Endothelial cell of umbilical vein (primary cell): ENCODE measurements at regions of chr3 and their contacts with region 1.

Region 1: DNA sequence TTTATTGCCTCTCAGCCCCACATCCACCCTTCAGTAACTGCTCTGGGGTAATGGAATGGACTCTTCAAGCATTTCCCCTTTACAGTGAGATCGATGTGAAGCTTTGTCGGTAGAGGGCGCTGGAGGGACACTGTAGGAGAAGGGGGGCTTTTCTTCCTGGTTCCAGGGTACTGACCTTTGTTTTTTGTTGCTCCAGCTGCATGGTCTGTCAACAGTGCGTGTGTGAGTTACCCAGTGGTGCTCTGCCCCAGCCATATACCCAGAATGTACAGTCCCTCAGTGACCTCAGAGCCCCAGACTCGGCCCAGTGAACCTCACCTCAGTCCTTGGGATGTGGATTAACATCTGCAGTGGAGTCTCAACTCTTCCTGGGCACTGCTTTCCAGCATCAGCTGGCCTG is 180.3 kb upstream of the TSC22D2 start:
- DNase-seq: peak; percentile 72
- H3K4me3 ChIP-seq: no peak overlapping the region
- H3K27ac ChIP-seq: no peak overlapping the region
- H3K4me1 ChIP-seq: peaks cover 27% of the 10 kb centered on the region
- H3K27me3 ChIP-seq: peaks cover 25 to 26% of the 10 kb centered on the region in 2 experiments
- CTCF ChIP-seq: peak; percentile 82 to 84
- POLR2A ChIP-seq: no peak

Region 2: GRCh38 chr3:150183678-150184425 is 44.0 kb before region 1 on chr3:
- CTCF ChIA-PET with region 1: interaction called, 12 read pairs
- POLR2A ChIA-PET with region 1: no interaction called
- dilution Hi-C with region 1: no loop called
- intact Hi-C with region 1: no loop called
- DNase-seq: peak; percentile 80
- H3K4me3 ChIP-seq: peak overlapping the region; percentile 8 to 51 (median 31)
- H3K27ac ChIP-seq: peak overlapping the region; percentile 18
- H3K4me1 ChIP-seq: peaks cover 16% of the 10 kb centered on the region
- H3K27me3 ChIP-seq: peaks cover 0 to 6% of the 10 kb centered on the region in 2 experiments
- CTCF ChIP-seq: peak; percentile 63 to 65
- POLR2A ChIP-seq: no peak

Region 3: GRCh38 chr3:150286390-150287147 is 58.7 kb after region 1 on chr3:
- CTCF ChIA-PET with region 1: interaction called, 17 read pairs
- POLR2A ChIA-PET with region 1: no interaction called
- dilution Hi-C with region 1: no loop called
- intact Hi-C with region 1: loop called (anchors 1 kb)
- DNase-seq: peak; percentile 68
- H3K4me3 ChIP-seq: no peak overlapping the region
- H3K27ac ChIP-seq: no peak overlapping the region
- H3K4me1 ChIP-seq: no peaks in the 10 kb centered on the region
- H3K27me3 ChIP-seq: no peaks in the 10 kb centered on the region
- CTCF ChIP-seq: peak; percentile 41 to 55
- POLR2A ChIP-seq: no peak

Region 4: GRCh38 chr3:150414258-150414657 is 186.4 kb after region 1 on chr3:
- CTCF ChIA-PET with region 1: interaction called, 76 read pairs
- POLR2A ChIA-PET with region 1: interaction called, 20 read pairs
- dilution Hi-C with region 1: loop called (anchors 25 kb)
- intact Hi-C with region 1: no loop called
- DNase-seq: peak; percentile 59
- H3K4me3 ChIP-seq: peak overlapping the region; percentile 5 to 99 (median 6)
- H3K27ac ChIP-seq: no peak overlapping the region
- H3K4me1 ChIP-seq: peaks cover 51% of the 10 kb centered on the region
- H3K27me3 ChIP-seq: no peaks in the 10 kb centered on the region
- CTCF ChIP-seq: no peak
- POLR2A ChIP-seq: no peak

Region 5: GRCh38 chr3:150763122-150763841 is 535.4 kb after region 1 on chr3 and contains the start of gene SIAH2:
- CTCF ChIA-PET with region 1: interaction called, 3 read pairs
- POLR2A ChIA-PET with region 1: no interaction called
- dilution Hi-C with region 1: no loop called
- intact Hi-C with region 1: loop called (anchors 5 kb)
- DNase-seq: peak; percentile 94
- H3K4me3 ChIP-seq: peak within 1 kb of the TSS; percentile 43 to 85 (median 64)
- H3K27ac ChIP-seq: peak within 1 kb of the TSS; percentile 86
- H3K4me1 ChIP-seq: peaks cover 19% of the 10 kb centered on the region
- H3K27me3 ChIP-seq: no peaks in the 10 kb centered on the region
- CTCF ChIP-seq: no peak
- POLR2A ChIP-seq: peak; percentile 92
- total RNA-seq, gene SIAH2: 16.0 and 16.7 TPM in 2 replicates